ENCODE measurements at regions of chr17 and their contacts with region 1.

Region 1: GRCh38 chr17:37047631-37048104 is 98.9 kb downstream of the AATF start:
- DNase-seq: peak; percentile 66 to 87
- ATAC-seq: peak; percentile 86 to 96 (median 93)
- H3K4me3 ChIP-seq: no peak overlapping the region
- H3K4me3 Mint-ChIP-seq: peak overlapping the region; percentile 1
- H3K27ac ChIP-seq: no peak overlapping the region
- H3K27ac Mint-ChIP-seq: peak overlapping the region; percentile 69 to 83
- H3K4me1 ChIP-seq: peaks cover 4% of the 10 kb centered on the region
- H3K4me1 Mint-ChIP-seq: peaks cover 14 to 15% of the 10 kb centered on the region in 2 donors
- H3K27me3 ChIP-seq: no peaks in the 10 kb centered on the region
- H3K27me3 Mint-ChIP-seq: no peaks in the 10 kb centered on the region
- CTCF ChIP-seq: peak; percentile 81

Region 2: DNA sequence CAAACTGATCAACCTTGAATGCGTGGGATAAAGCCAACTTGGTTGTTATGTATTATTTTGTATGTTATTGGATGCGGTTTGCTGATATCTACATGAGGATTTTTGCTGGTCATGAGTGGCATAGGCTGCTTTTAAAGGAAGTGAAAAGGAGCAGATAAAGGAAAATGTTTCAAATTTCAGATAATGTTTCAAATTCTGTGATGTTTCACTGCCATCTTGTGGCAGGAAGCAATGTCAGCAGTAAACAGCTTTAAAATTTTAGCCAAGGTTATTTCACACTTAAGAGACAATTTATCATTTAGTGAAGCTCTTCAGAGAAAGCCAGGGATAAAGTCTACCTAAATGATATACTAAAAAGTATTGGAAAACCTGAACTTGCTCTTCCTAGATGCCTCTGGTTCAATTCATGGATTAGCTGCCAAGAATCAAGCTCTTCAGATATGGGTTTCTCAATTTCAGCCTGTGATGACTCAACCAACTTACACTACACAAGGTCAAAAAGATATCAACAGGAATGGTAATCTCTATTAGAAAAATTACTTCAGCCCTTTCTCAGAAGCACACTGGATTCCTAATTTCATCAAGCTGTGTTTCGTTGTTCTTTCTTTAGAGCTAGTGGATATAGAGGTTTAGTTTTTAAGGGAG is 192.1 kb after region 1 on chr17:
- intact Hi-C with region 1: loop called (anchors 10 kb)
- DNase-seq: peak in 1 of 2 donors; percentile 54
- ATAC-seq: no peak
- H3K4me3 ChIP-seq: no peak overlapping the region
- H3K4me3 Mint-ChIP-seq: no peak overlapping the region
- H3K27ac ChIP-seq: no peak overlapping the region
- H3K27ac Mint-ChIP-seq: no peak overlapping the region
- H3K4me1 ChIP-seq: no peaks in the 10 kb centered on the region
- H3K4me1 Mint-ChIP-seq: no peaks in the 10 kb centered on the region
- H3K27me3 ChIP-seq: no peaks in the 10 kb centered on the region
- H3K27me3 Mint-ChIP-seq: no peaks in the 10 kb centered on the region
- CTCF ChIP-seq: peak; percentile 61

Measured in natural killer cell (primary cell).